Caco-2 (cell line): ENCODE measurements at regions of chr2 and their contacts with region 1.

Region 1: GRCh38 chr2:15874854-15875804 is 65.2 kb upstream of the MYCN start:
- DNase-seq: no peak
- H3K4me3 ChIP-seq: no peak overlapping the region
- H3K4me3 Mint-ChIP-seq: no peak overlapping the region
- H3K27ac Mint-ChIP-seq: peak overlapping the region; percentile 19
- H3K4me1 ChIP-seq: peaks cover 17% of the 10 kb centered on the region
- H3K4me1 Mint-ChIP-seq: peaks cover 8% of the 10 kb centered on the region
- H3K27me3 ChIP-seq: no peaks in the 10 kb centered on the region
- H3K27me3 Mint-ChIP-seq: no peaks in the 10 kb centered on the region
- CTCF ChIP-seq: no peak

Region 2: GRCh38 chr2:15811367-15811766 is 63.8 kb before region 1 on chr2:
- CTCF ChIA-PET with region 1: no interaction called
- POLR2A ChIA-PET with region 1: no interaction called
- intact Hi-C with region 1: loop called (anchors 5 kb)
- DNase-seq: peak; percentile 23 to 53
- H3K4me3 ChIP-seq: no peak overlapping the region
- H3K4me3 Mint-ChIP-seq: no peak overlapping the region
- H3K27ac Mint-ChIP-seq: peak overlapping the region; percentile 52
- H3K4me1 ChIP-seq: peaks cover 14% of the 10 kb centered on the region
- H3K4me1 Mint-ChIP-seq: no peaks in the 10 kb centered on the region
- H3K27me3 ChIP-seq: no peaks in the 10 kb centered on the region
- H3K27me3 Mint-ChIP-seq: no peaks in the 10 kb centered on the region
- CTCF ChIP-seq: no peak